HepG2 (cell line): ENCODE measurements at regions of chr9 and their contacts with region 1.

Region 1: DNA sequence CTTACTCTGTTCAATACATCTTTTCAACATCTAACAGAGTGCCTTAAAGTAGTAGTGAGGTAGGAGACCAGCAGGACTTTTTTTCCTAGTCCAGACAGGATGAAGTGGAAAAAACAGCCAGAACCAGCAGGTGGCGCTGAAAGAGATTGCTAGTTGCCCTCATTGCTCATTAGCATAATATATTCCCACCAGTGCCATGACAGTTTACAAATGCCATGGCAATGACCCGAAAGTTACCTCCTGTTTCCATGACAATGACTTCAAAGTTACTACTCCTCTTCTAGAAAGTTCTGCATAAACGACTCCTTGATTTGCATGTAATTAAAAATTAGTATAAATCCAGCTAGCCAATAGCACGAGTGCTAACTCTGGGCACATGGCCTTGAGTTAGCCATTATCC is 387.4 kb downstream of the ACTL7B start:
- DNase-seq: no peak
- ATAC-seq: peak; percentile 49
- H3K4me3 ChIP-seq: no peak overlapping the region
- H3K27ac ChIP-seq: no peak overlapping the region
- H3K4me1 ChIP-seq: peaks cover 43% of the 10 kb centered on the region
- H3K27me3 ChIP-seq: 0 out of 5 replicates have a peak, but pooled peaks cover 0 to 4% of the 10 kb centered on the region in 2 experiments
- CTCF ChIP-seq: 0 out of 2 replicates have a peak, but pooled peaks have one; percentile 25
- EP300 ChIP-seq: no peak
- POLR2A ChIP-seq: no peak
- RAD21 ChIP-seq: no peak

Region 2: DNA sequence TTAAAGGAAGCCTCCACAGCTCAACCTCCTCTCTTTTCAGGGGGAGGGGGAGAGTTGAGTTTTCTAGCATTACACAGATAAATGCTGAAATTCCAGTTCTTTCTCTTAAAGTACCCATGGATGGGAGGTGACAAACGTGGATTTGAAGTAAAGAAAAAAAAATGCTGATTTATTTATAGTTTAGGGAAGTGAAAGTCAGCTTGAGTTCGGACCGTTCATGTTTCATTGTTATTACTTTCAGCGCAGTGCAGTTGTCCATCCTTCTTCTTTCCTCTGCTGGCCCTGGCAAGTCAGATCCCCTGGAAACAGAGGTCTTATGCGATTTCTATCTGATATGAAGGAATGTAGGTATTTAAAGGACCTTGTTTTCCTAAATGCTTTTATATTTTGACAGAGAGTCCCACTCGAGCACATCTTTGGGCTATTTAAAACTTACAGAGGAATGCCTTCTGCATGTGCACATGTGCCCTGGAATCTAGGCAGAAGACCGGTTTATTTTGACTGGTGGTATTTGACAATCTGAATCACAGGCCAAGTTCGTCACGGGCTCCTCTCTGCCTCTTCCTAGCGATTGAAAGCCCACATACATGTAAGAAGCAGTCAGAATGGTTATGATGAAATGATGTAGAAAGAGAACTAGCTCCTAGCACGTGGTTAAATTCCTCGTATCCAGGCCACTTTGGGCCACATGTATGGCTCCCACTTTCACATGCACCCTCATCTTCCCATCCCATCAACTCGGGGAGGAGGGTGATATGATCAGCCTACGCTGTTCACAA is 593.6 kb before region 1 on chr9:
- CTCF ChIA-PET with region 1: no interaction called
- POLR2A ChIA-PET with region 1: no interaction called
- in situ Hi-C with region 1: no loop called
- intact Hi-C with region 1: no loop called
- DNase-seq: no peak
- ATAC-seq: no peak
- H3K4me3 ChIP-seq: no peak overlapping the region
- H3K27ac ChIP-seq: no peak overlapping the region
- H3K4me1 ChIP-seq: no peaks in the 10 kb centered on the region
- H3K27me3 ChIP-seq: no peaks in the 10 kb centered on the region
- CTCF ChIP-seq: no peak
- EP300 ChIP-seq: no peak
- POLR2A ChIP-seq: no peak
- RAD21 ChIP-seq: no peak

Region 3: DNA sequence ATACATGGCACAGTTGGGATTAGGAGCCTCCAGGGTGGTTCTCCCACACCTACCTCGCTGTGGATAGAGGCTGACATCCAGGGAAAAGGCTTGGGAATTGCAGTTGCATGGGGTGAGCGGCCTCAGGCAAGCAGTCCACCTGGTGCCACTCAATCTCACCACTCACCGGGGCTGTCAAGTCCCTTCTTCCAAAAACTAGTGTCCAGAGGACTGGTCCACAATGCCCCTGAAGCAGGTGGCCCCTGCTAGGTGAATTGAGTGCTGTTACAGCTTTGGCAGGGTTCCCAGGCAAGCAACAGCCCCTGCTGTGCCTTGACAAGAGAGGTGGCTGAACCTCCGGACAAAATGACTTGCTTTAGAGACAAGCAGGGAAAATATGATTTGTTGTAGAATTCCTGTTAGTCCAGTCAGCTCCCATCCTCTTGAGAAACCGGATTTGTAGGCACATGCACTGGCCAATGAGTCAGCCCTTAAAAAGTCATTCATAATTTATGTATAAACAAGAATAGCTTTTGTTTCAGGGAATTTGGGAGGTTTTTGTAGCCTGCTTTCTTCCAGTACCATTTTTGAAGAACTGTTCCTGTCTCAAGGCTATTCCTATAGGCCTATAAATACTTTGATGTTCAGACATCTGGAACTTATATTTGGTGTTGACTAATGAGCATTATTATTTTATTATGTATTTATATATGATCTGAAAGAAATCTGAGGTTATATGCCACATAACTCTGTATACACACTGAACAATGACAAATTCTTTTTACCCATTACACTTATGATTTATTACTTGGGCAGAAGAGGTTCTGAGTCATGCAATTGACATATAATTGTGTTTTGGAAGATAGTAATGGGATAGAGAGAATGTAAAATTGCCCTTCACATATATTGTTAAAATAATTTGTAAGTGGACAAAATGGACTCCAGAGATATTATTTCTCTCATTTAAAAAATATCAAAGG is 23.7 kb before region 1 on chr9:
- CTCF ChIA-PET with region 1: no interaction called
- POLR2A ChIA-PET with region 1: interaction called, 11 read pairs
- in situ Hi-C with region 1: no loop called
- intact Hi-C with region 1: loop called (anchors 2 kb)
- DNase-seq: peak; percentile 72
- ATAC-seq: no peak
- H3K4me3 ChIP-seq: peak overlapping the region in 1 of 3 experiments; percentile 7; a peak in 1 of 6 replicates
- H3K27ac ChIP-seq: peak overlapping the region; percentile 82
- H3K4me1 ChIP-seq: peaks cover 66% of the 10 kb centered on the region
- H3K27me3 ChIP-seq: no peaks in the 10 kb centered on the region
- CTCF ChIP-seq: peak; percentile 21; the same call in 1 of the 2 replicates
- EP300 ChIP-seq: no peak; a peak in 1 of 4 replicates
- POLR2A ChIP-seq: no peak
- RAD21 ChIP-seq: no peak